ENCODE measurements at regions of chr12 and their contacts with region 1.

Region 1: DNA sequence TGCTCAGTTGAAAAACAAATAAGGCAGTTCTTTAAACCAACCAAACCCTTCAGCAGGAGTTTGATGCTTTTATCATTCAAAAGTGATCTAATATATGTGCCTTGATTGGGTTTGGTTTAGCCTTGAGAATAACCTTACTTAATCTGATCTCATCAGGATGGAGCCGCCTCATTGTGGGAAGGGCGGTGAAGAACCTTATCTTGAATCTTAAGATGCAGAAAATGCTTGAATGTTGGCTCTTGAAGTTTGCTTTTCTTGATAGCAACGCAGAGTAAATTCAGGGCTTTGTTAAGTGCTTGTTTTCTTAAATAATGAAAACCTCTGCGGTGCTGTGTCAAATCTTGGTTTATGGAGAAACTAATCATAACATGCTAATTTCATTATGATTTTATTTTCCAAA is 138.2 kb downstream of the MON2 start:
- DNase-seq: no peak
- H3K4me3 ChIP-seq: peak overlapping the region in 3 of 4 donors; percentile 80 to 94 (median 91)
- H3K27ac ChIP-seq: peak overlapping the region in 2 of 4 donors; percentile 98 to 100
- H3K4me1 ChIP-seq: peaks cover 0 to 34% (median 12%) of the 10 kb centered on the region in 3 donors
- H3K27me3 ChIP-seq: no peaks in the 10 kb centered on the region
- CTCF ChIP-seq: no peak
- POLR2A ChIP-seq: no peak

Region 2: GRCh38 chr12:62458626-62459025 is 146.2 kb before region 1 on chr12:
- intact Hi-C with region 1: no loop called
- DNase-seq: no peak
- H3K4me3 ChIP-seq: no peak overlapping the region
- H3K27ac ChIP-seq: no peak overlapping the region
- H3K4me1 ChIP-seq: no peaks in the 10 kb centered on the region
- H3K27me3 ChIP-seq: no peaks in the 10 kb centered on the region
- CTCF ChIP-seq: no peak
- POLR2A ChIP-seq: no peak

Region 3: DNA sequence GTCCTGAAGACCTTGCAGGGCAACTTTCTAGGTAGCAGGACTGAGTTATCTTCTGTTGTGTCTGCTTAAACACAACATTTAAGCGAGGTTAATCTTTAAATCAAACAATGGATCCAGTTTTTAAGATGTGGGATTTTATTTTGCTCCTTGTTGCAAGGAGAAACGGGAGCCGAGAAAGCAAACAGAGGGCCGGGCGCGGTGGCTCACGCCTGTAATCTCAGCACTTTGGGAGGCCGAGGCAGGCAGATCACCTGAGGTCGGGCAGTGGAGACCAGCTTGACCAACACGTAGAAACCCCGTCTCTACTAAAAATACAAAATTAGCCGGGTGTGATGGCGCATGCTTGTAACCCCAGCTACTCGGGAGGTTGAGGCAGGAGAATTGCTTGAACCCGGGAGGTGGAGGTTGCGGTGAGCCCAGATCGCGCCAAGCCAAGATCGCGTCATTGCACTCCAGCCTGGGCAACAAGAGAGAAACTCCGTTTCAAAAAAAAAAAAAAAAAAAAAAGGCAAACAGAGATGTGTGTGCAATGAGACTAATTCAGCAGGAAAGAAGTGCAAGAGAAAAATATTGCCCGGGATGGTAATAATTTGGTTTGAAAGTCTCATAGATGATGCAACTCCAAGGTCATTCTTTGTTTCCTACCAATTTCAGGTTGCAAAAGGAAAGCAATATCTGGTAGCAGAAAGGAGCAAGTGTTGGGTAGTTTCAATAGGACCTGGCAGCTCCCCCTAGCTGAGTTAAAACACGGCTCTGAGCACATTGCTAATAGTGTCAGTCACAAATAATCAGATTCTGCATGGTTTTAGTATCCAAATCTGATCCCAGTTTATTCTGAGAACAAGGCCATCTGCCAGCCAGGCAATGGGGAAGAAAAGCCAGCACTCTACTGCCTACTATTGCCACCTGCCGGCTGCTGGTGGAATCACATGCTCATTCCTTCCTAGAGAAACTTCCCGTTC is 188.7 kb after region 1 on chr12:
- intact Hi-C with region 1: loop called (anchors 5 kb)
- DNase-seq: peak; percentile 8
- H3K4me3 ChIP-seq: no peak overlapping the region
- H3K27ac ChIP-seq: peak overlapping the region in 1 of 4 donors; percentile 22
- H3K4me1 ChIP-seq: peaks cover 0 to 13% (median 3%) of the 10 kb centered on the region in 3 donors
- H3K27me3 ChIP-seq: no peaks in the 10 kb centered on the region
- CTCF ChIP-seq: peak; percentile 92 to 98 (median 96)
- POLR2A ChIP-seq: no peak